Gastrocnemius medialis (tissue), 4 donors: ENCODE measurements at regions of chr1 and their contacts with region 1.

Region 1: GRCh38 chr1:229848752-229849677 is 218.0 kb upstream of the GALNT2 start:
- DNase-seq: no peak
- ATAC-seq: no peak
- H3K4me3 ChIP-seq: no peak overlapping the region
- H3K27ac ChIP-seq: no peak overlapping the region
- H3K4me1 ChIP-seq: peaks cover 17 to 20% of the 10 kb centered on the region in 2 donors
- H3K27me3 ChIP-seq: no peaks in the 10 kb centered on the region
- CTCF ChIP-seq: peak in 3 of 5 experiments; percentile 16 to 48 (median 40)
- POLR2A ChIP-seq: no peak

Region 2: GRCh38 chr1:229893762-229894444 is 44.9 kb after region 1 on chr1:
- in situ Hi-C with region 1: loop called in 1 of 4 experiments (anchors 10 kb)
- intact Hi-C with region 1: no loop called
- DNase-seq: no peak
- ATAC-seq: no peak
- H3K4me3 ChIP-seq: no peak overlapping the region
- H3K27ac ChIP-seq: no peak overlapping the region
- H3K4me1 ChIP-seq: peaks cover 22 to 24% of the 10 kb centered on the region in 2 donors
- H3K27me3 ChIP-seq: no peaks in the 10 kb centered on the region
- CTCF ChIP-seq: no peak
- POLR2A ChIP-seq: no peak

Region 3: DNA sequence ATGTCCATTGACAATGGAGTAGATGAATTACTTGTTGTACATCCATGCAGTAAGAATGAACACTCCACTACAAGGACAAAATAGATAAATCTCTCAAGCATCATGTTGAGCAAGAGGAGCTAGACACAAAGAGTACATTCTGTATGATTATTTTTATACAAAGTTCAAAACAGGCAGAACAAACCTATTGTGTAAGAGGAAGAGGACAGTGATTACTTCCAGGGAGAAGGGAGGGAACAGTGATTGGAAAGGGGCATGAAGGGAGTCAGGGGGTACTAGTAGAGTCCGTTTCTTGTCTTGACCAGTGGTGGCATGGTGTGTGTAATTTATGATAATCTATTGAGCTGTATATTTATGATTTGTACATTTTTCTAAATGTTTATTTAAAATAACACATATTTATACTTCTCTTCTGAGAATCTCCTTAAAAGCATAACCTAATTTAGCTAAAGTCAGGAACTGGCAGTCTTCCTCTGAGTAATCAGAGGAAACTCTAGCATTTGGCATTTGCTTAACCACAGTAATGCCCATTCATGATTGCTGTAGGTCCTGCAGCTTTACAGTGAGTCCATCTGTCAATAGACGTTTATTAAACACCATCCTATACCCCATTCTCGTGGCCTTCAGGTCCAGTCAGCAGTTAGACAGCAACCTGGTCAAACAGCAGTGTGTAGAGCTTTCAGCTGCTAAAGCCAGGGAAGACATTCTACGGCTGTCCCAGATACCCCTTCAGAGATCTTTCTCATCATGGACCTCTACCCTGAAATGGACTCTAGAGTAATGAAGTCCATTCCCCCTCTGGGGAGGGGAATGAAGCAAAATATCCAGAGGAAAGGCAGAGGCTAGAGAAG is 103.9 kb after region 1 on chr1:
- in situ Hi-C with region 1: no loop called
- intact Hi-C with region 1: loop called (anchors 10 kb)
- DNase-seq: no peak
- ATAC-seq: peak; percentile 80 to 97
- H3K4me3 ChIP-seq: no peak overlapping the region
- H3K27ac ChIP-seq: peak overlapping the region in 2 of 4 donors; percentile 12 to 71
- H3K4me1 ChIP-seq: peaks cover 0 to 16% of the 10 kb centered on the region in 2 donors
- H3K27me3 ChIP-seq: no peaks in the 10 kb centered on the region
- CTCF ChIP-seq: no peak
- POLR2A ChIP-seq: no peak

Region 4: DNA sequence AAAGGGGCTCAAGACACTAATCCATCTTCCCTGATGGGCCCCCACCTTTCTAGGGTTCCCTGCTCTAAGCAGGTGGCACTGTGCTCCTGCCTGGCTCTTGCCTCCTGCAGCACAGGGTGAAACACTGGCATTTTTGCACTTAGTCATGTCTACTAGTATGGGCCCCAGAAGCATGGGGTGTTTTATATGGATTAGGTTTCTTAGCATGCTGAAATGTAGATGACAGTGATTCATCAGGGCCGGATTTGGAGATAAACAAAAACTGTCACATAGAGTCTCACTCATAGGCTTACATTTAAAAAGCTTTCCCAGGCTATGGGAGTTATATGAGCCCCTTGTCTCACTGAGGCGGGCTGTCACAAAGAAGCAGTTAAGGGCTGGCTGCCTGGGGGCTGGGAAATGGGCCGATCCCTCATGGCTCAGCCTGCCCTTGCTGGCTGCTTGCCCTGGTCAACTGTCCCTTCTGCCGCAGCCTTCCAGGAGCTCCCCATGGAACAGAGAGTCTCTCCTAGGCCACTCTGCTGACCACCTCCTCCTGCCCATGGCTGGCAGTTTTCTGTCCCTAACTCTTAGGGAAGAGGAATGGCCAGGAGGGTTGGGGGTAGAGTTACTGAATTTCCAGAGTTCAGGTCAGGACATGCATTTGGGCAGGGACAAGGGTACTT is 224.5 kb after region 1 on chr1:
- in situ Hi-C with region 1: loop called in 1 of 4 experiments (anchors 5 kb)
- intact Hi-C with region 1: no loop called
- DNase-seq: peak; percentile 78 to 85
- ATAC-seq: peak; percentile 84 to 90
- H3K4me3 ChIP-seq: peak overlapping the region in 1 of 4 donors; percentile 26
- H3K27ac ChIP-seq: peak overlapping the region; percentile 95 to 97 (median 97)
- H3K4me1 ChIP-seq: peaks cover 89% of the 10 kb centered on the region in 2 donors
- H3K27me3 ChIP-seq: no peaks in the 10 kb centered on the region
- CTCF ChIP-seq: peak in 1 of 5 experiments; percentile 14
- POLR2A ChIP-seq: peak; percentile 48 to 84